AG04450 (cell line): ENCODE measurements at regions of chr1 and their contacts with region 1.

Region 1: GRCh38 chr1:91165033-91165654 is 143.3 kb upstream of the ZNF644 start:
- DNase-seq: peak; percentile 10
- H3K4me3 ChIP-seq: no peak overlapping the region
- H3K27ac ChIP-seq: no peak overlapping the region
- H3K27me3 ChIP-seq: no peaks in the 10 kb centered on the region
- CTCF ChIP-seq: peak; percentile 96

Region 2: GRCh38 chr1:90579212-90579802 is 585.8 kb before region 1 on chr1:
- CTCF ChIA-PET with region 1: interaction called, 34 read pairs
- POLR2A ChIA-PET with region 1: no interaction called
- DNase-seq: no peak
- H3K4me3 ChIP-seq: no peak overlapping the region
- H3K27ac ChIP-seq: no peak overlapping the region
- H3K27me3 ChIP-seq: peaks cover 3% of the 10 kb centered on the region
- CTCF ChIP-seq: peak; percentile 67

Region 3: GRCh38 chr1:90729504-90730242 is 435.5 kb before region 1 on chr1:
- CTCF ChIA-PET with region 1: interaction called, 10 read pairs
- POLR2A ChIA-PET with region 1: no interaction called
- DNase-seq: no peak
- H3K4me3 ChIP-seq: no peak overlapping the region
- H3K27ac ChIP-seq: no peak overlapping the region
- H3K27me3 ChIP-seq: peaks cover 76% of the 10 kb centered on the region
- CTCF ChIP-seq: no peak

Region 4: GRCh38 chr1:90989990-90990389 is 175.2 kb before region 1 on chr1:
- CTCF ChIA-PET with region 1: no interaction called
- POLR2A ChIA-PET with region 1: no interaction called
- DNase-seq: no peak
- H3K4me3 ChIP-seq: no peak overlapping the region
- H3K27ac ChIP-seq: no peak overlapping the region
- H3K27me3 ChIP-seq: no peaks in the 10 kb centered on the region
- CTCF ChIP-seq: no peak

Region 5: DNA sequence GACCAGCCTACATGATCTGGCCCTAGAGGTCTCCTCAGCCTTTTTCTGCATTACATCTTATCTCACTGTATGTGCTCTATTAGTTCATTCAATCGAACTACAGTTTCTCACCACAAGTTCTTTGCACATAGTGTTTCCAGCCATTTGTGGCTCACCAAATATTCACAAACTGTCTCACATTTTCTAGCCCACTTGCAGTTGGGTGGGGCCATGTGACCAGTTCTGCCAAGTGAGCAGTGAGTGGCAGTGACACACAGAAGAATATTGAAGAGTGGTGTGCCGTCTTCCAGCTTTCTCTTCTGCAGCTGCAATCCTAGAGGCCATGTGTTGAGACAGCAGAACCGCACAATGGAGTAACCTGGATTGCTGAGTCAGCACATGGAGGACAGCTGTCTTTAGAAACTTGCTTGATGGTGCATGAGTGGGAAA is 40.1 kb before region 1 on chr1:
- CTCF ChIA-PET with region 1: interaction called, 26 read pairs
- POLR2A ChIA-PET with region 1: no interaction called
- DNase-seq: no peak
- H3K4me3 ChIP-seq: no peak overlapping the region
- H3K27ac ChIP-seq: no peak overlapping the region
- H3K27me3 ChIP-seq: no peaks in the 10 kb centered on the region
- CTCF ChIP-seq: no peak

Region 6: DNA sequence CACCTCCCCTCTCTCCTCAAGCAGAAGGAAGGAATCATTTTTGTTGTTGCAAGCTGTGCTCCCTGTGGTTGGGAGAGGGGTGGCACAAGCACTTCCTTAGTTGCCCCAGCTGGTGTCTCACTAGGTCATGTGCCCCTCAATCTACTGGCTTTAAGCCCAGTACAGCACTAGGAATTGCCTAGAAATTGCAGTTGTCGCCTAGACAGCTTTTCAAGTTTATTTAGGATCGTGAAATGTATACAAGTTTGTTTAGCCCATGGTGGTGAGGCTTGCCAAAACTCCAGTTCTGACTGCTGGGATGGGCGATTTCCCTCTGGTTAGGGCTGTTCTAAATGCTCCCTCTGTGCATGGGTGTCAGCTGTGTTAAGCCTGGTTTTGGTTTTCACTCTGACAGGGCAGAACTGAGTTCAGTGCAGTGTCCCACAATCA is 16.5 kb before region 1 on chr1:
- CTCF ChIA-PET with region 1: interaction called, 28 read pairs
- POLR2A ChIA-PET with region 1: no interaction called
- DNase-seq: no peak
- H3K4me3 ChIP-seq: no peak overlapping the region
- H3K27ac ChIP-seq: no peak overlapping the region
- H3K27me3 ChIP-seq: no peaks in the 10 kb centered on the region
- CTCF ChIP-seq: no peak

Region 7: DNA sequence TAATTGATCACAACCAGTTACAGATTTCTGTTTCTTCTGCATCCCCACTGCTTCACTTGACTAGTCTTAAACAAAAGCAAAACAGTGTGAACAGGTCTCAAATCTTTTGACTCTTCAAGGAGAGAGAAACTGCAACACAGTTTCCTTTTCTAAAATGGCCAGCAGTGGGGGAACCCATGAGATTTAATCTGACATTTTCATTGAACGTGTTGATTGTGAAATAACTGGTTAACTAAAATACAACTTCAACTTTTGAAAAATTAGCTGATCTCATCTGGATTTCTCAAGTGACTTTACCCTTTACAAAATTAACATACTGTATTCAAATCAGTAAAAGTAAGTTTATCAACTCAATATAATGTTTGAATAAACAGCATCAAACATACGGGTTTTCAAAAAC is 96.5 kb after region 1 on chr1:
- CTCF ChIA-PET with region 1: interaction called, 10 read pairs
- POLR2A ChIA-PET with region 1: no interaction called
- DNase-seq: no peak
- H3K4me3 ChIP-seq: no peak overlapping the region
- H3K27ac ChIP-seq: no peak overlapping the region
- H3K27me3 ChIP-seq: no peaks in the 10 kb centered on the region
- CTCF ChIP-seq: no peak

Region 8: DNA sequence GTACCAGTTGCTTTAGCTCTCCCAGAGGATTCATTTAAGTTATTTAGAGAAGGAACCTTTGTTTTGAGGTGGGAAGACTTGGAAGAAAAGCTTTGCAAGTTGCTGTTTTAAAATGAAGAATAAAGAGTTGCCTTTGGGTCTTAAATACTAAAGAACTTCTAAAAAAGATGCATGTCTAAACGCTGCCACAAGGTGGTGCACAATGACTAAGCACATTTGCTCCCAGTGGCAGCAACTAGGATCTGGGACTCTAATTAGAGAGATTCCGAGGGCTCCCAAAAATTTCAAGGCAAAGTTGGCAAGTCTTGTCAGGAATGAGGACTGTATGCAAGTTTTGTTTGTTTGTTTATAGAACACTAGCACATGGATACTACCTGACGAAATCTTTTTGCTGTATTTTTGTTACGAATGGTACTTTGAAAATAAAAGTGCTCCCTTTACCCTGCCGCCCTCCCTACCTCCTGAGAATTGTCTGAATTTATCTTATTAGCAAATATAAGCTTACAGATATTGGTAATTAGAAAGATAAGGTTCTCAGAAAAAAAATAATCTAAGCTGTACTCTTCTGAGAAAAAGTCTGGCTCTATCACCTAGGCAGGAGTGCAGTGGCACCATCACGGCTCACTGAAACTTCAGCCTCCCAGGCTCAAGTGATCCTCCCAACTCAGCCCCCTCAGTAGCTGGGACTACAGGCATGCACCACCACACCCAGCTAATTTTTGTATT is 117.7 kb after region 1 on chr1:
- CTCF ChIA-PET with region 1: interaction called, 147 read pairs
- POLR2A ChIA-PET with region 1: no interaction called
- DNase-seq: peak; percentile 37
- H3K4me3 ChIP-seq: no peak overlapping the region
- H3K27ac ChIP-seq: no peak overlapping the region
- H3K27me3 ChIP-seq: peaks cover 4% of the 10 kb centered on the region
- CTCF ChIP-seq: peak; percentile 85

Region 9: GRCh38 chr1:91349524-91349923 is 184.4 kb after region 1 on chr1:
- CTCF ChIA-PET with region 1: no interaction called
- POLR2A ChIA-PET with region 1: no interaction called
- DNase-seq: no peak
- H3K4me3 ChIP-seq: no peak overlapping the region
- H3K27ac ChIP-seq: no peak overlapping the region
- H3K27me3 ChIP-seq: no peaks in the 10 kb centered on the region
- CTCF ChIP-seq: no peak